Activated T-helper 1 cell treated with anti-CD3 and anti-CD28 coated beads, Interleukin-12 subunit alpha, Interleukin-12 subunit beta, Interleukin-2, Interleukin-4 antibody, amounts not matched to agents 30 ng/mL and 10 ng/mL and 1 ng/mL, durations not matched to agents 14 hours and 24 hours and 36 hours (primary cell): ENCODE measurements at regions of chr10 and their contacts with region 1.

Region 1: DNA sequence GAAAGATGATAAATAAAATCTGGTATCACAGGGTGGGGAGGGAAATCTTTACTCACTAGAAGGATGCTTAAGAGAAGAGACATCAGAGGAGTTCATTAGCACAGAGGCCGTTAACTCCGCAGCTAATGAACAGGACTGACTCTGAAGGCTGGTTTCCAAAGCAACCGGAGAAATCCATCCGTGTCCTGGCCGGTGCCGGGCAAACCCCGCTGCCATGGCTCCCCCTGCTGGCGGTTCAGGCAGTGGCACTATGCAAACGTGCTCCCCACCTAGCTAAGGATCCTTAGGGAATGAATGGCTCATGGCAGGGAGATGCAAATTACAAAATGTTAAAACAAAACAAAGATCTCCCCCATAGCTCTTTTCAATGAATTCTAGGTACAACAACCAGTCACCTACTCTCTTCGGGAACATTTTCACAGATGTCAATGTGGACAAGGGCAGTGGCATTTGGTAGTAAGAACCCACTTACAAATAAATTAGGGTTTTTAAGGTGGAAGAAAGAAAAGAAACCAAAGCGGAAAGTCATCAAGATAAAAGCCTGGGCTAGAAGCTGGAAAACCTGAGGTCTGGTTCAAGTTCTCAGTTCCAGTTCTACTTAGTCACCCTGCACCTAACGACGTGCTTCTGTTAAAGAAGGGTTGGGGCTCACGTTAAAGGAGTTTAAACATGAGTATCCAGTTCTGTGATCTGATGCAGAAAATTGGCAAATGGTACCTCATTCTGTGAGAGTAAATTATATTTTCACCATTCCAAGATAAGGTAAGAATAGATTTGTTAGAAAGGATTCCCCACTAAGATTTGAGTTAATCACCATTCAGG is 138.2 kb downstream of the SVIL start:
- DNase-seq: peak; percentile 34
- H3K4me3 Mint-ChIP-seq: no peak overlapping the region
- H3K27ac Mint-ChIP-seq: no peak overlapping the region
- H3K4me1 Mint-ChIP-seq: no peaks in the 10 kb centered on the region
- H3K27me3 Mint-ChIP-seq: no peaks in the 10 kb centered on the region

Region 2: DNA sequence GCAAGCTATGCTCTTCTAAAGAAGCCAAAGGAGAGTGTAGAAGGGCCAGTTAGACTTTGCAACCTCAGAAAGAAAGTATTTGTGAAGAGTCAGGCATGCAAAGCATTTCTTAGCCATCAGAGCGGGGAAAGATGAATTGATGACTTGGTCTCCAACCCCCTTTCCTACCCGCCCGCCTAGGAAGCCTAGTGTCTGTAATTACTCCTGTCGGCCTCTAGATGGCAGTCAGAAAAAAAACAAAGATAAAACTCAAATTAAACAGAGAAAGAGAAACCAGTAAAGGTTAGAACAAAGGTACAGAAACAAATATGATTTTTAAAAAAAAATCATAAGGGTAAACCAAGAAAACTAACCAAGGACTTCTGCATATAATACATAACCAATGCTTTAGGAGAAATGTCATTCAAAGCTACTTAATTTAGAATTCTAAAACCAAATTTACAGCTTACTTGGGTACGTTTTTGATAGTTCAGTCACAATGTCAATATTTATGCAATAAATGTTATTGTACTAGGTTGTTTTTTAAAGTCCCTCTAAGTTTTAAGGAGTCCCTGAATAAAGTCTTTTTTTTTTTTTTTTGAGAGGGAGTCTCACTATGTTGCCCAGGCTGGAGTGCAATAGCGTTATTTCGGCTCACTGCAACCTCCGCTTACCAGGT is 110.1 kb before region 1 on chr10:
- intact Hi-C with region 1: loop called (anchors 1 kb)
- DNase-seq: no peak
- H3K4me3 Mint-ChIP-seq: no peak overlapping the region
- H3K27ac Mint-ChIP-seq: no peak overlapping the region
- H3K4me1 Mint-ChIP-seq: peaks cover 5% of the 10 kb centered on the region
- H3K27me3 Mint-ChIP-seq: peaks cover 11% of the 10 kb centered on the region

Region 3: DNA sequence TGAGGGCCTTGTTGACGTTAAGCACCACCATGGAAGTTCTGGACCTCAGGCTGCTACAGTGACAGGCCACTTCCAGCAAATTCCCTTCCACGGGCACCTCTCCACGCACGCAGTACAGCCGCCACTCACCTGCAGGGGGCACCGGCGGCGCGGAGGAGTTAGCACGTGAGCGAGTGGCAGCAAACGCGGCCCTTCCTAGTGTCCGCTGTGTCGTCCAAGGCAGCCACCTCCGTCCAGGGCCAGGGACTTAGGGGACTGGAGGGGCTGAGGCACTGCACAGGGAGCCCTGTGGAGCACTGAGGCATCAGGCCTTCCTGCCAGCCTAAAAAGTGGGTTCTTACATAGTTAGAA is 26.2 kb before region 1 on chr10:
- intact Hi-C with region 1: loop called (anchors 1 kb)
- DNase-seq: no peak
- H3K4me3 Mint-ChIP-seq: no peak overlapping the region
- H3K27ac Mint-ChIP-seq: no peak overlapping the region
- H3K4me1 Mint-ChIP-seq: peaks cover 7% of the 10 kb centered on the region
- H3K27me3 Mint-ChIP-seq: no peaks in the 10 kb centered on the region

Region 4: GRCh38 chr10:30573721-30574431 is 1077.3 kb after region 1 on chr10:
- intact Hi-C with region 1: no loop called
- DNase-seq: no peak
- H3K4me3 Mint-ChIP-seq: no peak overlapping the region
- H3K27ac Mint-ChIP-seq: no peak overlapping the region
- H3K4me1 Mint-ChIP-seq: no peaks in the 10 kb centered on the region
- H3K27me3 Mint-ChIP-seq: peaks cover 16% of the 10 kb centered on the region